ENCODE measurements at regions of chr4 and their contacts with region 1.

Region 1: GRCh38 chr4:44678094-44679041 is at the start of gene GUF1:
- DNase-seq: peak; percentile 67
- ATAC-seq: peak; percentile 90
- H3K4me3 ChIP-seq: peak within 1 kb of the TSS; percentile 85
- H3K27ac ChIP-seq: peak within 1 kb of the TSS; percentile 94
- H3K4me1 ChIP-seq: no peaks in the 10 kb centered on the region; the same call in 1 of the 2 replicates
- H3K27me3 ChIP-seq: no peaks in the 10 kb centered on the region
- CTCF ChIP-seq: no peak
- EP300 ChIP-seq: no peak; a peak in 1 of 4 replicates
- POLR2A ChIP-seq: peak; percentile 92
- RAD21 ChIP-seq: no peak
- polyA plus RNA-seq, gene GUF1: 5.8 to 11.5 TPM

Region 2: DNA sequence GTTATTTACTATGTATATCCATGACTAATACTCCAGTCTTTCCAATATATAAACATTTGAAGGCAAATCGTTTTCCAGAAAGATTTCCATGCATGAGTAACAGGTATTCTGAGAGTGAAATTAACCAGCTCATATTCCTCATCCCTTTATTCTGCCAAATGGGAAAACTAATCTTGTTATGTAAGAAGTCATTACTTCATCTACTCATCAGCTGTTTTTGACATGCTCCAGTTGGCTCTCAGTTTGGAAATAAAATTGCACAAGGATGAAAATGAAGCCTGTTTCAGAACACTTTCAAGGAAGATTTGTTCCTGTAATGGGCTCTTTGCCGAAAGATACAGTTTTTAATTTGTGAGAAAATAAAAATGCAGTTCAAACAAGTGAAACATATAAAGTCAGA is 351.6 kb before region 1 on chr4:
- CTCF ChIA-PET with region 1: no interaction called
- POLR2A ChIA-PET with region 1: no interaction called
- RAD21 ChIA-PET with region 1: no interaction called
- SMC1A ChIA-PET with region 1: no interaction called
- in situ Hi-C with region 1: no loop called
- intact Hi-C with region 1: no loop called
- DNase-seq: no peak
- ATAC-seq: no peak
- H3K4me3 ChIP-seq: no peak overlapping the region
- H3K27ac ChIP-seq: no peak overlapping the region
- H3K4me1 ChIP-seq: no peaks in the 10 kb centered on the region
- H3K27me3 ChIP-seq: no peaks in the 10 kb centered on the region
- CTCF ChIP-seq: no peak
- EP300 ChIP-seq: no peak
- POLR2A ChIP-seq: no peak
- RAD21 ChIP-seq: no peak

Region 3: DNA sequence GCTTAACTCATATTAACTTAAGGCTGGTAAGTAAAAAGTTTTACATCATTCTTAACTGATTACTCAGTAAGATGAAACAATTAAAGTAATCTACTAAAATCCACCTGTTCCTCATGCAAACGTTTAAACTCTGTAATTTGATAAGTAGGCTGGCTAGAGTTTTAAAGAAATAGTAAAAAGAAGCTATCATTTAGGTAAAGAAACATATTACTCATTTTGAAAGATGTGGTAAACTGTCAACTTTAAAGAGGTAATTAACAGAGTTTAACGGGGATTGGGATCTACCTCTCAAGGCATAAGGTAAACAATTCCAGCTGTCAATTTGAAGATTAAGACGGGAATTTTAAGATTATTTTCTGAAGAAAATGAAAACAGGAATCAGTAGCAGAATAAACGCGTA is 38.2 kb after region 1 on chr4:
- CTCF ChIA-PET with region 1: interaction called, 7 read pairs
- POLR2A ChIA-PET with region 1: interaction called, 6 read pairs
- RAD21 ChIA-PET with region 1: no interaction called
- SMC1A ChIA-PET with region 1: interaction called, 10 read pairs
- in situ Hi-C with region 1: no loop called
- intact Hi-C with region 1: no loop called
- DNase-seq: no peak
- ATAC-seq: peak; percentile 33
- H3K4me3 ChIP-seq: no peak overlapping the region
- H3K27ac ChIP-seq: no peak overlapping the region
- H3K4me1 ChIP-seq: no peaks in the 10 kb centered on the region
- H3K27me3 ChIP-seq: no peaks in the 10 kb centered on the region
- CTCF ChIP-seq: no peak
- EP300 ChIP-seq: no peak
- POLR2A ChIP-seq: no peak
- RAD21 ChIP-seq: no peak

Region 4: GRCh38 chr4:44726262-44726871 is 48.0 kb after region 1 on chr4 and contains the start of gene GNPDA2:
- CTCF ChIA-PET with region 1: interaction called, 4 read pairs
- POLR2A ChIA-PET with region 1: interaction called, 4 read pairs
- RAD21 ChIA-PET with region 1: interaction called, 4 read pairs
- SMC1A ChIA-PET with region 1: interaction called, 9 read pairs
- in situ Hi-C with region 1: no loop called
- intact Hi-C with region 1: loop called (anchors 2 kb)
- DNase-seq: peak; percentile 50
- ATAC-seq: peak; percentile 94
- H3K4me3 ChIP-seq: peak within 1 kb of the TSS; percentile 92
- H3K27ac ChIP-seq: peak within 1 kb of the TSS; percentile 90
- H3K4me1 ChIP-seq: no peaks in the 10 kb centered on the region; the same call in 1 of the 2 replicates
- H3K27me3 ChIP-seq: no peaks in the 10 kb centered on the region
- CTCF ChIP-seq: peak in 2 of 3 experiments; percentile 15 to 30; a peak in 2 of 6 replicates
- EP300 ChIP-seq: no peak
- POLR2A ChIP-seq: peak; percentile 88
- RAD21 ChIP-seq: no peak
- polyA plus RNA-seq, gene GNPDA2: 29.8 to 45.8 TPM